Esophagus muscularis mucosa (tissue), 4 donors: ENCODE measurements at regions of chr1 and their contacts with region 1.

Region 1: DNA sequence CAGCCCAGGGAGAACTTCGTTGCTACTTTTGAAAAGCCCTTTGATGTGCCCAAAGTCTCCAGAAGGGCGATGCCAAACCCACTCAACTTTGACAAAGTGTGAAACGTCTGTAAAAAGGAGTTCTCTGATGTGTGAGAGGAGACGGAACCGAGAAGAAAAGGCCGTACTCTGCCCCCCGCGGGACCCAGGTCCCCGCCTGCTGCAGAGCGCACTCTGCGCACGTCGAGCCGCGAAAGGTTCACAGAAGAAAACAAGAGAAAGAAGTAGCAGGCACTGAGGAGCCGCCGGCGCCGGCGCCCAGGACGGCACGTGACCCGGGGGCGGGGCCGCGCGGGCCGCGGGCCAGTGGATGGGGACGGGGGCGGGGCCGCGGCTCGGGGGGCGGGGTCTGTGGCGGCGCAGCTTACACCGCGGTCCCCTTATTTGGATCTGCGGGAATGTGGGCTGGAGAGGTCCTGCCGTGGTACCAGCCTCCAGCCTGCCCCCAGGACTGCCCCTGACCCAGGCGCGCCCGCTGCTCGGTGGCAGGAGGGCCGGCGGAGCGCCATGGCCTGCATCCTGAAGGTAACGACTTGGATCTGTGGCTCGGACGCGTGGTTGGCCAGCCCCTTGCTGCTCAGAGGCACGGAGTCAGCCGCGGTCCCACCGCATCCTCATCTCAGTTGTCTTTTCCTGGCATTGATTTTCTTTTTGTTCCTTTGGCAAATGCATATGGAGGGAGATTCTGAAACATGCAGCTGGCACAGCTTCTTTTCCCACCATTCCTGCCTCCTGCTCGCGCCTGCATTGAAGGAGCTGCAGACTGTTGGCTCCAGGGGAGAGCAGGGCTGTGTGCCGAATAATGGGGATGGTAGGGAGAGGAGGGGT is at the start of gene ST6GALNAC3:
- DNase-seq: peak; percentile 96
- H3K4me3 ChIP-seq: peak within 1 kb of the TSS; percentile 70 to 82 (median 77)
- H3K27ac ChIP-seq: peak within 1 kb of the TSS; percentile 72 to 87 (median 80)
- H3K4me1 ChIP-seq: peaks cover 8 to 25% (median 19%) of the 10 kb centered on the region in 4 donors
- H3K27me3 ChIP-seq: no peaks in the 10 kb centered on the region
- CTCF ChIP-seq: no peak
- EP300 ChIP-seq: no peak
- POLR2A ChIP-seq: no peak
- total RNA-seq, gene ST6GALNAC3: 2.1 to 6.8 (median 4.8) TPM

Region 2: GRCh38 chr1:76625886-76626678 is 551.5 kb after region 1 on chr1:
- intact Hi-C with region 1: no loop called
- DNase-seq: no peak
- H3K4me3 ChIP-seq: no peak overlapping the region
- H3K27ac ChIP-seq: no peak overlapping the region
- H3K4me1 ChIP-seq: no peaks in the 10 kb centered on the region
- H3K27me3 ChIP-seq: no peaks in the 10 kb centered on the region
- CTCF ChIP-seq: no peak
- EP300 ChIP-seq: no peak
- POLR2A ChIP-seq: no peak

Region 3: DNA sequence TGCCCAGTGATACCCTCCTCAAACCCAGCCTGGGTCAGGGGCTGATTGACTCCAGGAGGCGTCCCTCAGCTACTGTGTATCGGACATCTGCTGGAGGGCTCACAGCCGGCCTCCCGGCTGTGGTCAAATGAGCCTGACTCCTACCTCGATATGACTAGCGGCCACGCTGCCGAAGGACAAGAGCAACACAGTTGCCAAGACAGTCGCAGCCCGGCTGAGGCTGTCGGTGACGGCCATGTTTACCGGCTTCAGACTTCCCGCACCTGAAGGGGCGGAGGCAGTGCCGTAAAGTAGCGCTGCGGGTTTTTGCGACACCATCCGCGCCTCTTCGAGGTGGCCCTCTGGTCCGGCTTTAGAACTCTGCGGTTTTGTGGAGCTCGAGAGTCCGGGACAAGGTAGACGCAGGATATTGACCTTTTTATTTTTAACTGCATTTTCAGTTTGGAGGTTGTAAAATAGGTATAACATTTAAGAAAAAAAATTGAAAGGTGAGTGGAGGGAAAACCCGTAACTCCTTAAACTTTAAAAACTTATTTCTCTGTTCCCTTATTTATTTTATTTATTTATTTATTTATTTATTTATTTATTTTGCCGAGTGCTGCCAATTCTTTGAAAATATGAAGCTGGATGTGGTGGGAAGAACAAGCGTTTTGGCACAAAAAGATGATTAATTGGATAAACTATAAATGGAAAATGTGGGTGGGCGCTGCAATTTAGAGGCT is 1144.8 kb after region 1 on chr1 and contains the start of gene PIGK:
- intact Hi-C with region 1: loop called (anchors 10 kb)
- DNase-seq: peak; percentile 96
- H3K4me3 ChIP-seq: peak within 1 kb of the TSS; percentile 62 to 78 (median 74)
- H3K27ac ChIP-seq: peak within 1 kb of the TSS; percentile 75 to 89 (median 84)
- H3K4me1 ChIP-seq: peaks cover 5 to 19% (median 12%) of the 10 kb centered on the region in 4 donors
- H3K27me3 ChIP-seq: no peaks in the 10 kb centered on the region
- CTCF ChIP-seq: peak in 1 of 3 experiments; percentile 5
- EP300 ChIP-seq: no peak
- POLR2A ChIP-seq: no peak
- total RNA-seq, gene PIGK: 13.3 to 18.3 (median 16.3) TPM